Activated T-helper 2 cell treated with anti-CD3 and anti-CD28 coated beads, Interferon-gamma antibody, Interleukin-2, Interleukin-4, amounts not matched to agents 10 μg/mL and 5 μg/mL and 100 μg/mL, durations not matched to agents 14 hours and 24 hours and 36 hours (primary cell): ENCODE measurements at regions of chr6 and their contacts with region 1.

Region 1: GRCh38 chr6:44074439-44075136 is 52.7 kb downstream of the MRPL14 start:
- DNase-seq: peak; percentile 62
- H3K4me3 Mint-ChIP-seq: peak overlapping the region; percentile 83
- H3K27ac Mint-ChIP-seq: peak overlapping the region; percentile 90
- H3K4me1 Mint-ChIP-seq: peaks cover 23% of the 10 kb centered on the region
- H3K27me3 Mint-ChIP-seq: peaks cover 1% of the 10 kb centered on the region

Region 2: DNA sequence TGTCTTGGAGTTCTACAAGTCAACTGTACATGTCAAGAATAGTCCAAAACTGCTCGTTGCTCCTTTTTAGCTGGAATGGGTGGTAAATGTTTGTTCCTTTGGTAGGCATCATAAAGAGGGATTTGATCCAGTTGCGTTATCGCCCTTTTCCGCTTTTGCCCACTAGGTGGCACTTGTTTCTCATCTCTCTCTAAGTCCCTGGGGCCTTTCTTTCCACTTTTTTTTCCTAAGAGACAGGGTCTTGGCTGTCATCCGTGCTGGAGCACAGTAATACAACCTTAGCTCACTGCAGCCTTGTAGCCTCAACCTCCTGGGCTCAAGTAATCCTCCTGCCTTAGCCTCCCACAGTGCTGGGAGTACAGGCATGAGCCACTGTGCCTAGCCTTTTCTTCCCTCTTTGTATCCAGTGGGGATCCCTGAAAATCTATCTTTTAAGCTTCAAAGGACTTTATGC is 466.3 kb before region 1 on chr6:
- intact Hi-C with region 1: loop called (anchors 1 kb)
- DNase-seq: no peak
- H3K4me3 Mint-ChIP-seq: no peak overlapping the region
- H3K27ac Mint-ChIP-seq: no peak overlapping the region
- H3K4me1 Mint-ChIP-seq: peaks cover 4% of the 10 kb centered on the region
- H3K27me3 Mint-ChIP-seq: no peaks in the 10 kb centered on the region

Region 3: GRCh38 chr6:43723737-43724295 is 350.8 kb before region 1 on chr6:
- intact Hi-C with region 1: loop called (anchors 1 kb)
- DNase-seq: peak; percentile 55
- H3K4me3 Mint-ChIP-seq: no peak overlapping the region
- H3K27ac Mint-ChIP-seq: no peak overlapping the region
- H3K4me1 Mint-ChIP-seq: peaks cover 25% of the 10 kb centered on the region
- H3K27me3 Mint-ChIP-seq: peaks cover 12% of the 10 kb centered on the region

Region 4: DNA sequence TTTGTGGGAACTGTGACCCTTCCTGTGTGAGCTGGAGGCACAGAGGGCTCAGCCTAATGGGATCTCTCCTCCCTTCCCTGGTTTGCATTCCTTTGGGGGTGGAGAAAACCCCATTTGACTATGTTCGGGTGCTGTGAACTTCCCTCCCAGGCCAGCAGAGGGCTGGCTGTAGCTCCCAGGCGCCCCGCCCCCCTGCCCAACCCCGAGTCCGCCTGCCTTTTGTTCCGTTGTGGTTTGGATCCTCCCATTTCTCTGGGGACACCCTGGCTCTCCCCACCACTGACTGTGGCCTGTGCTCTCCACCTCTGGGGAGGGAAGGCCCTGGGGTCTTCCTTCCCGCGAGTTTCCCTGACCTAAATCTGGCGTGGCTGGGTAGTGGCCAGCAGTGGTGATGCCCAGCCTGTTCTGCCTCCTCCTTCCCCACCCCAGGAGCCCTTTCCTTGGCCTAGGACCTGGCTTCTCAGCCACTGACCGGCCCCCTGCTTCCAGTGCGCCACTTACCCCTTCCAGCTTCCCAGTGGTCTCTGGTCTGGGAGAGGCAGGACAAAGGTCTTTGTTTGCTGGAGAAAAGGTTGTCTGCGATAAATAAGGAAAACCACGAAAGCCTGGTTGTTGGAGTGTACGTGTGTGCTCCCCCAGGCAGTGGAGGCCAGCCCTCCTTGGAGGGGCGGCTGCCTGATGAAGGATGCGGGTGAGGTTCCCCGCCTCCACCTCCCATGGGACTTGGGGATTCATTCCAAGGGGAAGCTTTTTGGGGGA is 299.6 kb before region 1 on chr6:
- intact Hi-C with region 1: loop called (anchors 1 kb)
- DNase-seq: peak; percentile 57
- H3K4me3 Mint-ChIP-seq: peak overlapping the region; percentile 62
- H3K27ac Mint-ChIP-seq: no peak overlapping the region
- H3K4me1 Mint-ChIP-seq: peaks cover 48% of the 10 kb centered on the region
- H3K27me3 Mint-ChIP-seq: no peaks in the 10 kb centered on the region

Region 5: GRCh38 chr6:44002593-44003344 is 71.8 kb before region 1 on chr6:
- intact Hi-C with region 1: loop called (anchors 2 kb)
- DNase-seq: peak; percentile 49
- H3K4me3 Mint-ChIP-seq: peak overlapping the region; percentile 54
- H3K27ac Mint-ChIP-seq: no peak overlapping the region
- H3K4me1 Mint-ChIP-seq: peaks cover 10% of the 10 kb centered on the region
- H3K27me3 Mint-ChIP-seq: peaks cover 27% of the 10 kb centered on the region

Region 6: GRCh38 chr6:44064089-44064947 is 10.3 kb before region 1 on chr6:
- intact Hi-C with region 1: loop called (anchors 1 kb)
- DNase-seq: no peak
- H3K4me3 Mint-ChIP-seq: no peak overlapping the region
- H3K27ac Mint-ChIP-seq: peak overlapping the region; percentile 6
- H3K4me1 Mint-ChIP-seq: peaks cover 7% of the 10 kb centered on the region
- H3K27me3 Mint-ChIP-seq: no peaks in the 10 kb centered on the region

Region 7: DNA sequence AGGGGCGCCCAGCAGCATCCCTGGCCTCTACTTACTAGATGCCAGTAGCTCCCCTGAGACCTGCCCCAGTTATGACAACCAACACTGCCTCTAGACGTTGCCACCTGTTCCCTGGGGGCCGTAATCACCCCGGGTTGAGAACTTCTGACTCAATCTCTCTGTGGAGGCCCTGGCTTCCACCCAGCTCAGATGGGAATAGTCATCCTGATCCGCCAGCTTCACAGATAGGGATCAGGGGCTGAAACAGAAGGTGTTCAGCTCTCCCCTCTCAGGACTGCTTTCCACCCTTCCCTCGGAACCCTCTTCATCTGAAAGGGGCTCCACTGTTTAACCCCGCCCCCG is 87.4 kb after region 1 on chr6:
- intact Hi-C with region 1: no loop called
- DNase-seq: no peak
- H3K4me3 Mint-ChIP-seq: no peak overlapping the region
- H3K27ac Mint-ChIP-seq: peak overlapping the region; percentile 12
- H3K4me1 Mint-ChIP-seq: peaks cover 21% of the 10 kb centered on the region
- H3K27me3 Mint-ChIP-seq: peaks cover 17% of the 10 kb centered on the region